Left lung (tissue), 14 donors: ENCODE measurements at regions of chr5 and their contacts with region 1.

Region 1: DNA sequence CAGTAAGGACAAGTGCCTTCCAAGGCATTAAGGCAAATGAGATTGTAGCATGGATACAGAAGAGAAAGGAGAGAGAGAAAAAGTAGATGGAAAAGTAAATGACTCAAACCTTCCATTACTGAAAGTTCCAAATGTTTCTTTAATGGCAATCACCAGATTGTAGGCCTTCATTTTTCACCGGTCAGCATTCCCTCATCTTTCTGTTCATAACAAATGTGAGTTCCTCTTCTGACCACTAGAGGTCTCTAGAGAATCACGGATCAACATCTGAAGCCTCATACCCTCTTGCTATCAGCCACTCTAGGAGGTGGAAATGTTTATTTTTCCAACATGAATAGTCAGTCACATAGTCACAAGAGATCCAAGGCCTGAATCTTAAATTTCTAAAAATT is 73.6 kb upstream of the RPS23 start:
- DNase-seq: peak in 2 of 4 donors; percentile 68 to 84
- ATAC-seq: peak; percentile 94
- H3K4me3 ChIP-seq: no peak overlapping the region
- H3K27ac ChIP-seq: peak overlapping the region; percentile 60 to 63
- H3K4me1 ChIP-seq: peaks cover 7 to 24% of the 10 kb centered on the region in 2 donors
- H3K27me3 ChIP-seq: no peaks in the 10 kb centered on the region
- CTCF ChIP-seq: peak; percentile 68 to 71

Region 2: GRCh38 chr5:83473346-83474163 is 1121.8 kb after region 1 on chr5:
- intact Hi-C with region 1: loop called in 1 of 2 experiments (anchors 10 kb)
- DNase-seq: peak; percentile 91 to 98 (median 95)
- ATAC-seq: peak; percentile 84
- H3K4me3 ChIP-seq: peak overlapping the region; percentile 39 to 55
- H3K27ac ChIP-seq: peak overlapping the region; percentile 80 to 89
- H3K4me1 ChIP-seq: peaks cover 2 to 51% of the 10 kb centered on the region in 2 donors
- H3K27me3 ChIP-seq: peaks cover 15 to 100% of the 10 kb centered on the region in 2 donors
- CTCF ChIP-seq: peak; percentile 74 to 75

Region 3: DNA sequence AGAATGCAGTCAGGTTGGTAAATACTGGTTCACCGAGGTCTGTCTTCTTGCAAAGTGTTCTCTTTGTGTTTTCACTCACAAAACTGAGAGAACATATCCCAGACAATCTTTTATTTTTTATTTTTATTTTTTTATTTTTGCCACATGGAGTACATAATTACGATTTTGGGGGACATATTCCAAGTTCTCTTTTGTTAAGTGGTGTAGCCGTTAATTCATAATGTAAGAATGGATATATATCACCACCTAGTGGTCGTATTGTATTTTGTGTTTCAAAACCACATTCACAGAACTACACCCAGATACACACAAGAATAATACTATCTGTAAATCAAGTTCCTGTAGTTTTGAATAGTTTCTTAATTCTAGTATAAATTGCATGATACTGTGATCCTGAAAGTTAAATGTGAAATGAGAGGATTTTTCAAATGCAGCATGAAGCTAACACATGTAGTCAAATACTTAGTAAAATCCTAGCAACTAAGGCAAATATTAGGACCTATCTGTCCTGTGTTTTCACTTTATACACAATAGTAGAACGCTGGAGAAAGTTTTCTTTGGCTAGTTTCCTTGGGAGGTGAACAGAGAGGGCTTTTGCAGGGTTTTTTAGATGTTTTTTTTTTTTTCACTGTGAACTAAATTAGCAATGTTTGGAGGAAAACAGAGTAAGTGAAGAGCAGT is 1212.5 kb after region 1 on chr5:
- intact Hi-C with region 1: loop called in 1 of 2 experiments (anchors 10 kb)
- DNase-seq: peak in 1 of 4 donors; percentile 49
- ATAC-seq: peak; percentile 73
- H3K4me3 ChIP-seq: no peak overlapping the region
- H3K27ac ChIP-seq: no peak overlapping the region
- H3K4me1 ChIP-seq: peaks cover 0 to 9% of the 10 kb centered on the region in 2 donors
- H3K27me3 ChIP-seq: no peaks in the 10 kb centered on the region
- CTCF ChIP-seq: peak; percentile 38 to 60